ENCODE measurements at regions of chr1 and their contacts with region 1.

Region 1: GRCh38 chr1:23979878-23980724 is at the start of gene SRSF10:
- DNase-seq: peak; percentile 98
- H3K4me3 ChIP-seq: peak within 1 kb of the TSS; percentile 91 to 99 (median 95)
- H3K27ac ChIP-seq: peak within 1 kb of the TSS; percentile 79
- H3K4me1 ChIP-seq: peaks cover 47% of the 10 kb centered on the region
- H3K27me3 ChIP-seq: no peaks in the 10 kb centered on the region
- CTCF ChIP-seq: peak in 1 of 2 donors; percentile 41
- total RNA-seq, gene SRSF10: 64.2 to 94.7 TPM

Region 2: GRCh38 chr1:24018611-24019580 is 38.8 kb after region 1 on chr1:
- CTCF ChIA-PET with region 1: no interaction called
- dilution Hi-C with region 1: no loop called
- in situ Hi-C with region 1: no loop called
- intact Hi-C with region 1: loop called (anchors 1 kb)
- DNase-seq: peak; percentile 95
- H3K4me3 ChIP-seq: no peak overlapping the region
- H3K27ac ChIP-seq: peak overlapping the region; percentile 89
- H3K4me1 ChIP-seq: peaks cover 33% of the 10 kb centered on the region
- H3K27me3 ChIP-seq: no peaks in the 10 kb centered on the region
- CTCF ChIP-seq: no peak

Region 3: GRCh38 chr1:24027838-24028468 is 47.9 kb after region 1 on chr1:
- CTCF ChIA-PET with region 1: no interaction called
- dilution Hi-C with region 1: no loop called
- in situ Hi-C with region 1: no loop called
- intact Hi-C with region 1: loop called (anchors 2 kb)
- DNase-seq: peak; percentile 47
- H3K4me3 ChIP-seq: no peak overlapping the region
- H3K27ac ChIP-seq: no peak overlapping the region
- H3K4me1 ChIP-seq: peaks cover under 1% of the 10 kb centered on the region
- H3K27me3 ChIP-seq: no peaks in the 10 kb centered on the region
- CTCF ChIP-seq: peak; percentile 58 to 66

Region 4: DNA sequence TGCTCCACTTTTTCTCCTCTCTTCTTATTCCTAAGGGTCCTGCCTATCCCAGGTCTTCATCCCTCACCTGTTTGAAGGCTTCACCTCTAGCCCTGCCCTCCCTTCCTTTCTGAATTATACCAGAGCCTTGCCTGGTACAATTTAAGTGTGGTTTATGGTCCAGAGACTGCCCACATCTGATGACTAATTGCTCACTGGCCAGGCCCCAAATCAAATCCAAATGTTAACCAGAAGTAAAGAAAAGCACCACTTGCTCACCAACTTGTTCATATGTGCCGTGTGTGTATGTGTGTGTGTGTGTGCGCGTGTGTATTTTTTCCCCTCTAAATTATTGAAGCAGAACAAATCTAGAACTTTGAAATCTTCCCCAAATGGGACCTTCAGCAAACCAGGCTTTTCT is 105.4 kb after region 1 on chr1:
- CTCF ChIA-PET with region 1: no interaction called
- dilution Hi-C with region 1: loop called (anchors 10 kb)
- in situ Hi-C with region 1: no loop called
- intact Hi-C with region 1: no loop called
- DNase-seq: peak; percentile 36
- H3K4me3 ChIP-seq: no peak overlapping the region
- H3K27ac ChIP-seq: no peak overlapping the region
- H3K4me1 ChIP-seq: no peaks in the 10 kb centered on the region
- H3K27me3 ChIP-seq: no peaks in the 10 kb centered on the region
- CTCF ChIP-seq: no peak

Region 5: DNA sequence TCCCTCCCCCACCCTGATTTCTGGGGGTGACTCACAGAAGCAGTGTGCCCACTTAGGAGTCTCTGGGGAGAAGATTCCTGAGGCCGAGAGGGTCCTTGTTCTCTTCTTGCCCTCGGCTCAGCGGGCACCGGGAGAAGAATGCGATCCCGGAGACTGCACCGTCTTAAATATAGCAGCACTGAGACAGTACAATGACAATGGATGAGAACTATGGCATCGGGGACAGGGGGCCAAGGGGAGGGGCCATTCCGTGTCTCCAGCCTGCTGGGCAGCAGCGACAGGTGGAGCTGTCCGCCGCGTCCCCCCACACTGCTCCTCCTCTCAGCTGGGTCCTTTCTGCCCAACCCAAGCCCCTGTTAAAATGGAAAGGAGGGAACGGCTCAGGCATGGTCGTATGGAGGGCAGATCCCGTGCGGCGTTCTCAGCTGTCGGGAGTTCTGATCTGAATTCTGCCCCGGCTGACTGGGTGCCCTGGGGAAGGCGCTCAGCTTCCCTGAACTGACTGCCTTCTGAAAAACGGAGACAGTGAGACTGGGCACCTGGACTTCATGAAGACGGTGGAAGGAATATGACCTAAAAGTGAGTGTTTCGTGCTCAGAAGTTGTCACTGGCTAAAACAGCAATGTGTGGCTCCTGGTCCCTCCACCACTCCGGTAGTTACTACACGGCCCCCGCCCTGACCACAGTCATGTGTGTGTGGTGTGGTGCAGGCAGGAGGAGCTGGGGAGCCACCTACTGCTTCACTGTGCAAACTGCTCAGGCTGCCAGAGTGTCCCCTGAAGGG is 132.1 kb after region 1 on chr1 and contains the start of gene MYOM3:
- CTCF ChIA-PET with region 1: no interaction called
- dilution Hi-C with region 1: no loop called
- in situ Hi-C with region 1: no loop called
- intact Hi-C with region 1: loop called (anchors 1 kb)
- DNase-seq: peak; percentile 77
- H3K4me3 ChIP-seq: peak within 1 kb of the TSS in 1 of 3 experiments; percentile 33
- H3K27ac ChIP-seq: peak within 1 kb of the TSS; percentile 55
- H3K4me1 ChIP-seq: peaks cover 36% of the 10 kb centered on the region
- H3K27me3 ChIP-seq: no peaks in the 10 kb centered on the region
- CTCF ChIP-seq: peak; percentile 61 to 83
- total RNA-seq, gene MYOM3: 0.54 to 1.8 TPM

Region 6: DNA sequence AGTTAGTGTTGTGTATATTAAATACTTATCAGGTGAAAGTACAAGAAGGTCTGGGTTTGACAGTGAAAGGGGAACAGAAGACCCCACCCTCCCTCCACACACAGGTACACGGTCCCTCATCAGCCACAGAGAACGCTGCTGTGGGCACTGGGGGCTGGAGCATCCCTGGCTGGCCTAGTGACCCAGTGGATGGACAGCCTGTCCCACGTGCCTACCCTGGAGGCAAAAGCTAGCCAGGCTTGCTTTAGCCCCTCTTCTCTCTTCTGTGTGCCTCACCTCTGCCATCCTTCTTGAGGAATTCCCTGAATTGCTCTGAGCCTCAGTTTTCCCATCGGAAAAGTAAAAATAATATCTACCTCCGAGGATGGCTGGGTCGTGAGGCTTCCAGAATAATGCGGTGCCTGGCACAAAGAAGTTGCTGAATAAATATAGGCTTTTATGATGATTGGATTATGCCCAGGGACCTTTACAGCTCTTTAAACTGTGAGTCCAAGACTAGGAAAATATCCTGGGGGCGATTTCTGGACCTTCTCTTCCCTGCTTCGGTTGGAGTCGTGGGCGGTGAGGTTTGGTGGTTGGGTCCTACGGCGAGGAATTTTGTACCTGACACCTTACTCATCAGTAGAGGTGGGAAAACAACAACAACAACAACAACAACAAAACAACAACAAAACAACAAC is 206.1 kb after region 1 on chr1:
- CTCF ChIA-PET with region 1: no interaction called
- dilution Hi-C with region 1: no loop called
- in situ Hi-C with region 1: no loop called
- intact Hi-C with region 1: no loop called
- DNase-seq: no peak
- H3K4me3 ChIP-seq: peak overlapping the region; percentile 53 to 62 (median 58)
- H3K27ac ChIP-seq: no peak overlapping the region
- H3K4me1 ChIP-seq: peaks cover 32% of the 10 kb centered on the region
- H3K27me3 ChIP-seq: no peaks in the 10 kb centered on the region
- CTCF ChIP-seq: no peak

Measured in mammary epithelial cell (primary cell).